ENCODE measurements at regions of chr10 and their contacts with region 1.

Region 1: DNA sequence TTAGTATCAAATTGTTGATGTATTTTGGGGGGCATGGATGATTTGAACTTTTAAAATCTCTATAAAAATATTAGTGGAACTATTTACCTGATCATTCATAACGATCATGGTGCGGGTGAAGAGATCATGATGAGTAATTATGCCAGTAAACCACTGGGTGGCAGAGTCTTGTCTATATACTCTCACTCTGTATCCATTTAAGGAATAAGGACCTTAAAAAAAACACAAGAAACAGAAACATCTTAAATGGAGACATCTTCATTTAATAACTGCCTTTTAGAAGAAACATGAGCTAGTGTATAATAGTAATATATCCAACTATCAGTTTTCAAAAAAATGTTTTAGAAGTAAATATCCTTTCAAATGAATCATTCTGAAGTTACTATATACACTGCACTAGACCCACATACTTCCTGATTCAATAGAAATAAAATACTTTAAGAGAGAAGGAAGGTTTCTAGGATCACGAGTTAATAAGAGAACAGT is 84.0 kb downstream of the NRBF2 start:
- DNase-seq: peak; percentile 73
- ATAC-seq: peak; percentile 88
- H3K4me3 ChIP-seq: no peak overlapping the region
- H3K4me3 Mint-ChIP-seq: no peak overlapping the region
- H3K27ac ChIP-seq: peak overlapping the region in 1 of 2 donors; percentile 25
- H3K27ac Mint-ChIP-seq: peak overlapping the region; percentile 43
- H3K4me1 ChIP-seq: peaks cover 29 to 39% of the 10 kb centered on the region in 2 donors
- H3K4me1 Mint-ChIP-seq: peaks cover 54% of the 10 kb centered on the region
- H3K27me3 ChIP-seq: no peaks in the 10 kb centered on the region
- H3K27me3 Mint-ChIP-seq: no peaks in the 10 kb centered on the region
- CTCF ChIP-seq: peak; percentile 83

Region 2: GRCh38 chr10:63114031-63114814 is 102.9 kb before region 1 on chr10:
- CTCF ChIA-PET with region 1: no interaction called
- POLR2A ChIA-PET with region 1: no interaction called
- intact Hi-C with region 1: no loop called
- DNase-seq: no peak
- ATAC-seq: no peak
- H3K4me3 ChIP-seq: no peak overlapping the region
- H3K4me3 Mint-ChIP-seq: no peak overlapping the region
- H3K27ac ChIP-seq: no peak overlapping the region
- H3K27ac Mint-ChIP-seq: no peak overlapping the region
- H3K4me1 ChIP-seq: no peaks in the 10 kb centered on the region
- H3K4me1 Mint-ChIP-seq: no peaks in the 10 kb centered on the region
- H3K27me3 ChIP-seq: no peaks in the 10 kb centered on the region
- H3K27me3 Mint-ChIP-seq: peaks cover 16% of the 10 kb centered on the region
- CTCF ChIP-seq: no peak

Region 3: DNA sequence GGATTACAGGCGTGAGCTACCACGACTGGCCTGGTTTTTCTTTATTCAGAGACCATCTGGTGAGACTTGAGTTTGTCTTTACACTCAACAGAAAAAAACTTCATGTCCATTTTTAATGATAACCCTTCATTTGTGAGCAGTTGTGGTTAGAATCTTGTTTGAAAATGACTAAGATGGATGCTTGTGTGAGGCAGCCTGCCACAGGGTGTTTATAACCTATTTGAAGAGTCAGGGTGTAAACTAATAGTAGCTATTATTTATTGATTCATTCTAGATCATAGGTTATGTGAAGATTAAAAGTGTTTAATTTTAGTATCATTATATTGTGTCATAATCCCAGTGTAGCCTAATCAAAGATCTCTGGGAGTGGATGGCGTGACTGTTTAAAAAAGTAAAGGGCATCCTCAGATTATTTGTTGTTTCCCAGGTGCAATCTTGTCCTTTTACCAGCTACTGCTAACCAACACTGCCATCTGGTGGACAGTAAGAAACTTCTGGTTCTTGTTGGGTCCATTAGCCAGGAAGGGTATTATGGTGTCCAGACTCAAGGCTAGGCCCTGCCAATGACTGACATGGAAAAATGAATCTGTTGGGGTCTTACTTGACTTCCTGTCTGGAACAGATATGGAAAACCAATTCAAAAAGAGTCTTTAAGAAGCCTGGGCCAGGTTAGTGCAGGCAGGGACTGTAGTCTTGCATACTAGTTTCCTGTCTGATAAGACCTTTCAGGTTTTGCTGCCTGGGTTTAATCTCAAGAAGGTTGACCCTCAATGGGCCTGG is 59.1 kb before region 1 on chr10:
- CTCF ChIA-PET with region 1: no interaction called
- POLR2A ChIA-PET with region 1: no interaction called
- intact Hi-C with region 1: no loop called
- DNase-seq: peak; percentile 85
- ATAC-seq: peak; percentile 68
- H3K4me3 ChIP-seq: no peak overlapping the region
- H3K4me3 Mint-ChIP-seq: no peak overlapping the region
- H3K27ac ChIP-seq: no peak overlapping the region
- H3K27ac Mint-ChIP-seq: no peak overlapping the region
- H3K4me1 ChIP-seq: no peaks in the 10 kb centered on the region
- H3K4me1 Mint-ChIP-seq: peaks cover 9% of the 10 kb centered on the region
- H3K27me3 ChIP-seq: no peaks in the 10 kb centered on the region
- H3K27me3 Mint-ChIP-seq: no peaks in the 10 kb centered on the region
- CTCF ChIP-seq: peak; percentile 90

Region 4: DNA sequence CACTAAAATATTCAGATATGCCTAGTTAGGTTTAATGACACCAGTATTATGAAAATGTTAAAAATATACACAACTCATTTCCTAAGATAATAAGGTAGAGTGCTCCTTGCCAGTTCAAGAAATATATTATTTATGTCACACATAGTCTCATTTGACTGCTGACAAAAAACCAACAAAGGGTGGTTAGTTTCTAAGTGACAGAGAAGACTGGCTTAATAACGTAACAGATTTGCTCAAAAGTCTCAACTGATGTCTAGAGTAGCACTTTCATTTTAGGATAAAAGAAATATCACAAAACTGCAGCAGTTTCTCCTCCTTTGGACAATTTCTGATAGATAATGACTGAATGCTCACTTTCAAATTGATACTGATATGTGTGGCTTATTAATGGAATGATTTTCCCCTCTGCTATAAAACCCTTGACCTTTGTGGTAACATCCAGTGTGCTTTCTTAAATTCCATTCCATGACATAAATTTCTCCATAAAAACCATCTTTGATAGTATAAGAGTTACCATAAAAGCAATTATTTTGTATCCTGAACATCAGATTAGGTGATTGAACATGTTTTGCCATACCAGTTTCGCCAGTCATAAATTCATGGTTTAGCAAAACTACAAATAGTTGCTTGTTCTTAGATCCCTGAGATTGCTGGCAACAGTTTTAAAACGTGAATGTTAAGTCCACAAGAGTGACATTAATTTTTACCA is 10.2 kb after region 1 on chr10:
- CTCF ChIA-PET with region 1: interaction called, 22 read pairs
- POLR2A ChIA-PET with region 1: no interaction called
- intact Hi-C with region 1: loop called (anchors 1 kb)
- DNase-seq: no peak
- ATAC-seq: no peak
- H3K4me3 ChIP-seq: no peak overlapping the region
- H3K4me3 Mint-ChIP-seq: no peak overlapping the region
- H3K27ac ChIP-seq: peak overlapping the region; percentile 1 to 3
- H3K27ac Mint-ChIP-seq: peak overlapping the region; percentile 65
- H3K4me1 ChIP-seq: peaks cover 18 to 32% of the 10 kb centered on the region in 2 donors
- H3K4me1 Mint-ChIP-seq: peaks cover 65% of the 10 kb centered on the region
- H3K27me3 ChIP-seq: no peaks in the 10 kb centered on the region
- H3K27me3 Mint-ChIP-seq: no peaks in the 10 kb centered on the region
- CTCF ChIP-seq: no peak

Region 5: DNA sequence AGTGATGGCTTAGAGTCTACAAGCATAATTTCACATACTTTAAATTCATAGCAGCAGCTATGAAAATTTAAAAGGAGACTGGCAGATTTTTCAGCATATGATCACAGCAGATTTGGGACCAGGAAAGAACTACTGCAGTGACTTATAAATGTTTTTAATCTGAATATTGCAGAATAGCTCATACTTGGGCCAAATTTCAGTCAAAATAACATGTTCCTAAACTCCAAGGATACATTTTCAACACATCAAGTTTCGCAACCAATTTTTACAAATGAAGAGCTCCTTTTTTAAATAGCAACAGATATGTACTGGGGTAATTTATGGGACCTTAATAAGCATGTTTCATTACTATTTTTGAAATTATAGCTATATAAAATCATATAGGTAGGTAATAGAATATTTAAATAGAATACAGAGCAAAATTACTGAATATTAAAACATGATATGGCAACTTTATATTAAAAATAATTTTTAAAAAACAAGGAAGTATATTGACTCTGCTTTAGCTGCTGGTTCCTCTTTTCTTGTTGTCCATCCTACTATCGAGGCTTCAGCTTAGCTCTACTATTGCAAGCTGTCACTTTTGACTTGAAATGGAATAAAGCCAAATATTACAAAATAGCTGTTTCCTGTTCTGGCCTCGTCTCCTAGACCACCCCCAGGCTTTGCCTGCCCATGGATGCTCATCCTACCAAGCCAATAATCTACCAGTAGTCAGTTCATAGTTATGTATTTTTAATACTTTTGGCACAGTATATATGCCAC is 39.0 kb after region 1 on chr10:
- CTCF ChIA-PET with region 1: interaction called, 21 read pairs
- POLR2A ChIA-PET with region 1: no interaction called
- intact Hi-C with region 1: no loop called
- DNase-seq: peak; percentile 47
- ATAC-seq: peak; percentile 42
- H3K4me3 ChIP-seq: peak overlapping the region in 1 of 5 experiments; percentile 32
- H3K4me3 Mint-ChIP-seq: peak overlapping the region; percentile 83
- H3K27ac ChIP-seq: peak overlapping the region; percentile 34 to 73
- H3K27ac Mint-ChIP-seq: peak overlapping the region; percentile 88
- H3K4me1 ChIP-seq: peaks cover 81 to 92% of the 10 kb centered on the region in 2 donors
- H3K4me1 Mint-ChIP-seq: peaks cover 85% of the 10 kb centered on the region
- H3K27me3 ChIP-seq: no peaks in the 10 kb centered on the region
- H3K27me3 Mint-ChIP-seq: no peaks in the 10 kb centered on the region
- CTCF ChIP-seq: no peak

Region 6: DNA sequence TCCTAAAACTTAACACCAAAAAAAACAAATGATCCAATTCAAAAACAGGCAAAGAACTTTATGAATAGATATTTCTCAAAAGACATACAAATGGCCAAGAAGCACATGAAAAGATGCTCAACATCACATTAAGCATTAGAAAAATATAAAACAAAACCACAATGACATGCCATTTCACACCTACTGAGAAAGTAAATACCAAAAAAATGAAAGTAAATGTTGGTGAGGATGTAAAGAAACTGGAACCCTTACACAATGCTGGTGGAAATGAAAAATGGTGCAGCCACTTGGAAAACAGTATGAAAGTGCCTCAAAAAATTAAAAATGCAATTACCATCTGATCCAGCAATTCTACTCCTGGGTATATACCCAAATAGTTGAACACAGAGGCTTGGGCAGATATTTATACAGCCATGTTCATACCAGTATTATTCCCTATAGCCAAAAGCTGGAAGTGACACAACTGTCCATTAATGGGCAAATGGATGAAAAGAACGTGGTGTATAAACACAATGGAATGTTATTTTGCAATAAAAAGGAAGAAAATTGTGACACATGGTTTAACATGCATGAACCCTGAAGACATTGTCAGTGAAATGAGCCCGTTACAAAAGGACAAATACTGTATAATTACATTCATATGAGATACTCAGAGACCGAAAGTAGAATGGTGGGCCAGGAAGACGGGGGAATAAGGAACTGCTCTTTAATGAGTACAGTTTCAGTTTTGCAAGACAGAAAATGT is 159.6 kb after region 1 on chr10:
- CTCF ChIA-PET with region 1: interaction called, 3 read pairs
- POLR2A ChIA-PET with region 1: no interaction called
- intact Hi-C with region 1: loop called (anchors 5 kb)
- DNase-seq: peak; percentile 64
- ATAC-seq: peak; percentile 94
- H3K4me3 ChIP-seq: peak overlapping the region in 3 of 5 experiments; percentile 7 to 45 (median 40)
- H3K4me3 Mint-ChIP-seq: peak overlapping the region; percentile 59
- H3K27ac ChIP-seq: no peak overlapping the region
- H3K27ac Mint-ChIP-seq: peak overlapping the region; percentile 3
- H3K4me1 ChIP-seq: peaks cover 8 to 11% of the 10 kb centered on the region in 2 donors
- H3K4me1 Mint-ChIP-seq: peaks cover 17% of the 10 kb centered on the region
- H3K27me3 ChIP-seq: no peaks in the 10 kb centered on the region
- H3K27me3 Mint-ChIP-seq: no peaks in the 10 kb centered on the region
- CTCF ChIP-seq: no peak

Region 7: GRCh38 chr10:63478564-63478963 is 261.4 kb after region 1 on chr10:
- CTCF ChIA-PET with region 1: no interaction called
- POLR2A ChIA-PET with region 1: no interaction called
- intact Hi-C with region 1: no loop called
- DNase-seq: no peak
- ATAC-seq: no peak
- H3K4me3 ChIP-seq: no peak overlapping the region
- H3K4me3 Mint-ChIP-seq: no peak overlapping the region
- H3K27ac ChIP-seq: no peak overlapping the region
- H3K27ac Mint-ChIP-seq: no peak overlapping the region
- H3K4me1 ChIP-seq: no peaks in the 10 kb centered on the region
- H3K4me1 Mint-ChIP-seq: peaks cover 18% of the 10 kb centered on the region
- H3K27me3 ChIP-seq: no peaks in the 10 kb centered on the region
- H3K27me3 Mint-ChIP-seq: no peaks in the 10 kb centered on the region
- CTCF ChIP-seq: no peak

Region 8: GRCh38 chr10:63521416-63522276 is 304.5 kb after region 1 on chr10:
- CTCF ChIA-PET with region 1: interaction called, 4 read pairs
- POLR2A ChIA-PET with region 1: no interaction called
- intact Hi-C with region 1: loop called (anchors 5 kb)
- DNase-seq: peak; percentile 91
- ATAC-seq: peak; percentile 62
- H3K4me3 ChIP-seq: peak overlapping the region; percentile 46 to 89 (median 82)
- H3K4me3 Mint-ChIP-seq: peak overlapping the region; percentile 91
- H3K27ac ChIP-seq: peak overlapping the region; percentile 75 to 79
- H3K27ac Mint-ChIP-seq: peak overlapping the region; percentile 89
- H3K4me1 ChIP-seq: peaks cover 6 to 17% of the 10 kb centered on the region in 2 donors
- H3K4me1 Mint-ChIP-seq: peaks cover 39% of the 10 kb centered on the region
- H3K27me3 ChIP-seq: no peaks in the 10 kb centered on the region
- H3K27me3 Mint-ChIP-seq: no peaks in the 10 kb centered on the region
- CTCF ChIP-seq: no peak

Region 9: GRCh38 chr10:63644418-63645142 is 427.4 kb after region 1 on chr10:
- CTCF ChIA-PET with region 1: no interaction called
- POLR2A ChIA-PET with region 1: no interaction called
- intact Hi-C with region 1: no loop called
- DNase-seq: no peak
- ATAC-seq: no peak
- H3K4me3 ChIP-seq: no peak overlapping the region
- H3K4me3 Mint-ChIP-seq: no peak overlapping the region
- H3K27ac ChIP-seq: no peak overlapping the region
- H3K27ac Mint-ChIP-seq: no peak overlapping the region
- H3K4me1 ChIP-seq: no peaks in the 10 kb centered on the region
- H3K4me1 Mint-ChIP-seq: peaks cover 14% of the 10 kb centered on the region
- H3K27me3 ChIP-seq: no peaks in the 10 kb centered on the region
- H3K27me3 Mint-ChIP-seq: no peaks in the 10 kb centered on the region
- CTCF ChIP-seq: no peak

Measured in B cell (primary cell).